SK-N-SH (cell line): ENCODE measurements at regions of chr7 and their contacts with region 1.

Region 1: DNA sequence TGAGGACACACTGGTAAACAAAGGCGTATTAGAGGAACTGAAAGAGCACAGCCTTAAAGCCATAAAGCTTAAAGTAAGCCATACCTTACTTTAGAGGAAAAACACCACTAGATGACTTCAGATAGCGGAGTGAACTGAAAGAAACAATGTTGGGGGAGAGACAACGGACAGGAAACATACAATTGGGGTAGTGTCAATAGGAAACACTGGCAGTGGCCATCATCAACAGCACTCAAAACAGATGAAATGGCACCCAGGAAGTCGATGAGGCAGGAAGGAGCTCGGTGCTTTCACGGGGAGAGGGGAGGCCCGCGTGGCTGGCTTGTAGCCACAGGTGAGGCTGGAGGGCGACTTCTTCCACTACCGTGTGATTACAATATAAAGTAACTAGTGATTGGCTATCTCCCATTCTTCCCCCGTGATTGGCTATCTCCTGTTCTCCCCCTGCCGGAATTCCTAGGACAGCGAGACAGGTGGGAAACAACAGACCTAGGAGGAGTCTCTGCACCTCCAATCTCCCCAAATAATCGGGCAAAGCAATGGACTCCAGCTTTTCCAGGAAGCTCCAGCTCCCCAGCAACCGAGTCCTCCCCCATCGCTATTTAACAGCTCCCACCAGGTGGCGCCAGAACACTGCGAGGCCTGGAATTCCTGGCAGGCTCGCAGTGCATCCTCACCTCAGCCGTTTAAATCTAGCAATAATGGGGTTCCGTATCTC is 2.4 kb upstream of the TAS2R38 start:
- DNase-seq: peak; percentile 81
- H3K4me3 ChIP-seq: peak overlapping the region; percentile 51 to 60
- H3K27ac ChIP-seq: no peak overlapping the region
- H3K4me1 ChIP-seq: peaks cover 4% of the 10 kb centered on the region in 2 experiments; a peak in 1 of 4 replicates
- H3K27me3 ChIP-seq: peaks cover 11% of the 10 kb centered on the region; the same call in 1 of the 2 replicates
- CTCF ChIP-seq: peak; percentile 100
- EP300 ChIP-seq: no peak
- RAD21 ChIP-seq: peak; percentile 93

Region 2: GRCh38 chr7:141915565-141915964 is 60.4 kb before region 1 on chr7:
- CTCF ChIA-PET with region 1: no interaction called
- POLR2A ChIA-PET with region 1: no interaction called
- DNase-seq: no peak
- H3K4me3 ChIP-seq: no peak overlapping the region
- H3K27ac ChIP-seq: no peak overlapping the region
- H3K4me1 ChIP-seq: no peaks in the 10 kb centered on the region
- H3K27me3 ChIP-seq: peaks cover 6% of the 10 kb centered on the region; the same call in 1 of the 2 replicates
- CTCF ChIP-seq: no peak
- EP300 ChIP-seq: no peak
- RAD21 ChIP-seq: no peak

Region 3: GRCh38 chr7:141960687-141961422 is 15.1 kb before region 1 on chr7:
- CTCF ChIA-PET with region 1: interaction called, 31 read pairs
- POLR2A ChIA-PET with region 1: no interaction called
- DNase-seq: no peak
- H3K4me3 ChIP-seq: no peak overlapping the region
- H3K27ac ChIP-seq: no peak overlapping the region
- H3K4me1 ChIP-seq: no peaks in the 10 kb centered on the region
- H3K27me3 ChIP-seq: peaks cover 8% of the 10 kb centered on the region; the same call in 1 of the 2 replicates
- CTCF ChIP-seq: no peak
- EP300 ChIP-seq: no peak
- RAD21 ChIP-seq: no peak

Region 4: GRCh38 chr7:142001163-142001874 is 25.4 kb after region 1 on chr7:
- CTCF ChIA-PET with region 1: interaction called, 13 read pairs
- POLR2A ChIA-PET with region 1: no interaction called
- DNase-seq: no peak
- H3K4me3 ChIP-seq: no peak overlapping the region
- H3K27ac ChIP-seq: peak overlapping the region in 1 of 2 experiments; percentile 74; a peak in 2 of 4 replicates
- H3K4me1 ChIP-seq: peaks cover 0 to 17% of the 10 kb centered on the region in 2 experiments; a peak in 2 of 4 replicates
- H3K27me3 ChIP-seq: no peaks in the 10 kb centered on the region
- CTCF ChIP-seq: no peak
- EP300 ChIP-seq: no peak
- RAD21 ChIP-seq: no peak

Region 5: GRCh38 chr7:142188846-142189245 is 212.9 kb after region 1 on chr7:
- CTCF ChIA-PET with region 1: interaction called, 14 read pairs
- POLR2A ChIA-PET with region 1: no interaction called
- DNase-seq: no peak
- H3K4me3 ChIP-seq: no peak overlapping the region
- H3K27ac ChIP-seq: no peak overlapping the region
- H3K4me1 ChIP-seq: no peaks in the 10 kb centered on the region
- H3K27me3 ChIP-seq: peaks cover 6% of the 10 kb centered on the region; the same call in 1 of the 2 replicates
- CTCF ChIP-seq: peak; percentile 84
- EP300 ChIP-seq: no peak
- RAD21 ChIP-seq: peak; percentile 62

Region 6: GRCh38 chr7:142257958-142258357 is 282.0 kb after region 1 on chr7 and contains the start of gene PRSS58:
- CTCF ChIA-PET with region 1: no interaction called
- POLR2A ChIA-PET with region 1: no interaction called
- DNase-seq: no peak
- H3K4me3 ChIP-seq: no peak within 1 kb of the TSS
- H3K27ac ChIP-seq: no peak within 1 kb of the TSS
- H3K4me1 ChIP-seq: no peaks in the 10 kb centered on the region
- H3K27me3 ChIP-seq: 0 out of 2 replicates have a peak, but pooled peaks cover 11% of the 10 kb centered on the region
- CTCF ChIP-seq: no peak
- EP300 ChIP-seq: no peak
- RAD21 ChIP-seq: no peak
- polyA plus RNA-seq, gene PRSS58: not detected in 2 replicates

Region 7: GRCh38 chr7:142301923-142302550 is 326.1 kb after region 1 on chr7:
- CTCF ChIA-PET with region 1: interaction called, 15 read pairs
- POLR2A ChIA-PET with region 1: no interaction called
- DNase-seq: peak; percentile 22
- H3K4me3 ChIP-seq: no peak overlapping the region
- H3K27ac ChIP-seq: no peak overlapping the region
- H3K4me1 ChIP-seq: no peaks in the 10 kb centered on the region
- H3K27me3 ChIP-seq: peaks cover 28% of the 10 kb centered on the region; the same call in 1 of the 2 replicates
- CTCF ChIP-seq: peak; percentile 69
- EP300 ChIP-seq: no peak
- RAD21 ChIP-seq: peak; percentile 31